Naive thymus-derived CD4-positive, alpha-beta T cell (primary cell): ENCODE measurements at regions of chr9 and their contacts with region 1.

Region 1: GRCh38 chr9:7799234-7799943 is at the start of gene DMAC1:
- DNase-seq: peak; percentile 50 to 79 (median 72)
- ATAC-seq: peak; percentile 96
- H3K4me3 ChIP-seq: peak within 1 kb of the TSS; percentile 96
- H3K4me3 Mint-ChIP-seq: peak within 1 kb of the TSS; percentile 91 to 98 (median 95)
- H3K27ac ChIP-seq: peak within 1 kb of the TSS; percentile 88
- H3K27ac Mint-ChIP-seq: peak within 1 kb of the TSS; percentile 90 to 98 (median 93)
- H3K4me1 ChIP-seq: peaks cover 0 to 8% of the 10 kb centered on the region in 2 donors
- H3K4me1 Mint-ChIP-seq: peaks cover 12 to 62% (median 40%) of the 10 kb centered on the region in 7 donors
- H3K27me3 ChIP-seq: no peaks in the 10 kb centered on the region
- H3K27me3 Mint-ChIP-seq: peaks cover 0 to under 1% (median 0%) of the 10 kb centered on the region in 5 donors
- total RNA-seq, gene DMAC1: 17.5 to 54.1 (median 44.3) TPM

Region 2: GRCh38 chr9:7613931-7614330 is 185.5 kb before region 1 on chr9:
- CTCF ChIA-PET with region 1: no interaction called
- POLR2A ChIA-PET with region 1: interaction called, 3 read pairs
- intact Hi-C with region 1: loop called in 1 of 2 experiments (anchors 1 kb)
- DNase-seq: peak in 6 of 9 donors; percentile 15 to 59 (median 46)
- ATAC-seq: peak; percentile 70
- H3K4me3 ChIP-seq: peak overlapping the region; percentile 0
- H3K4me3 Mint-ChIP-seq: peak overlapping the region; percentile 68 to 90 (median 82)
- H3K27ac ChIP-seq: peak overlapping the region; percentile 31
- H3K27ac Mint-ChIP-seq: peak overlapping the region; percentile 71 to 87 (median 85)
- H3K4me1 ChIP-seq: peaks cover 9 to 29% of the 10 kb centered on the region in 2 donors
- H3K4me1 Mint-ChIP-seq: peaks cover 18 to 50% (median 38%) of the 10 kb centered on the region in 7 donors
- H3K27me3 ChIP-seq: no peaks in the 10 kb centered on the region
- H3K27me3 Mint-ChIP-seq: peaks cover 0 to 17% (median 0%) of the 10 kb centered on the region in 5 donors

Region 3: GRCh38 chr9:7622481-7622880 is 176.9 kb before region 1 on chr9:
- CTCF ChIA-PET with region 1: no interaction called
- POLR2A ChIA-PET with region 1: no interaction called
- intact Hi-C with region 1: loop called in 1 of 2 experiments (anchors 2 kb)
- DNase-seq: no peak
- ATAC-seq: no peak
- H3K4me3 ChIP-seq: no peak overlapping the region
- H3K4me3 Mint-ChIP-seq: no peak overlapping the region
- H3K27ac ChIP-seq: no peak overlapping the region
- H3K27ac Mint-ChIP-seq: no peak overlapping the region
- H3K4me1 ChIP-seq: peaks cover 10 to 15% of the 10 kb centered on the region in 2 donors
- H3K4me1 Mint-ChIP-seq: peaks cover 12 to 29% (median 23%) of the 10 kb centered on the region in 7 donors
- H3K27me3 ChIP-seq: no peaks in the 10 kb centered on the region
- H3K27me3 Mint-ChIP-seq: no peaks in the 10 kb centered on the region

Region 4: GRCh38 chr9:7756088-7756487 is 43.3 kb before region 1 on chr9:
- CTCF ChIA-PET with region 1: no interaction called
- POLR2A ChIA-PET with region 1: interaction called, 6 read pairs
- intact Hi-C with region 1: loop called in 1 of 2 experiments (anchors 1 kb)
- DNase-seq: no peak
- ATAC-seq: peak; percentile 61
- H3K4me3 ChIP-seq: no peak overlapping the region
- H3K4me3 Mint-ChIP-seq: peak overlapping the region in 1 of 10 donors; percentile 7
- H3K27ac ChIP-seq: no peak overlapping the region
- H3K27ac Mint-ChIP-seq: peak overlapping the region in 3 of 9 donors; percentile 13 to 87 (median 16)
- H3K4me1 ChIP-seq: no peaks in the 10 kb centered on the region
- H3K4me1 Mint-ChIP-seq: peaks cover 0 to 27% (median 8%) of the 10 kb centered on the region in 7 donors
- H3K27me3 ChIP-seq: no peaks in the 10 kb centered on the region
- H3K27me3 Mint-ChIP-seq: no peaks in the 10 kb centered on the region

Region 5: DNA sequence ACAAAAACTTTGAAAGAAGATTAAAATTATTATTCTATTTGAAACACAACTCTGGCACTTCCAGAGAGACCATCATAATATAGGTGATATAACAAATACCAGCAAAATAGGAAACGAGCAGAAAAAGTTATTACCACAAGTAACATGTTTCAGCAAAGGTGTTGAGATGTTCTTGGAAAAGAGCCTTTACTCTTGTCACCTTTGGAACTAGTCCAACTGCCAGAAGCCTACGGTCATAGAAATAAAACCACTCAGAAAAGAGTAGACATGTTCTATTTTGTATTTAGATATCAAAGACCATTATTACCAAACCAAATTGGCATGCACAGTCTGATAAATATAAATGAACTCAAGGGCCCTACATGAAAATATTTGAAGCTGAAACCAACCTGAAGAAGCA is 145.2 kb after region 1 on chr9:
- CTCF ChIA-PET with region 1: no interaction called
- POLR2A ChIA-PET with region 1: no interaction called
- intact Hi-C with region 1: no loop called
- DNase-seq: no peak
- ATAC-seq: no peak
- H3K4me3 ChIP-seq: no peak overlapping the region
- H3K4me3 Mint-ChIP-seq: no peak overlapping the region
- H3K27ac ChIP-seq: no peak overlapping the region
- H3K27ac Mint-ChIP-seq: no peak overlapping the region
- H3K4me1 ChIP-seq: no peaks in the 10 kb centered on the region
- H3K4me1 Mint-ChIP-seq: peaks cover 0 to 16% (median 8%) of the 10 kb centered on the region in 7 donors
- H3K27me3 ChIP-seq: no peaks in the 10 kb centered on the region
- H3K27me3 Mint-ChIP-seq: no peaks in the 10 kb centered on the region

Region 6: DNA sequence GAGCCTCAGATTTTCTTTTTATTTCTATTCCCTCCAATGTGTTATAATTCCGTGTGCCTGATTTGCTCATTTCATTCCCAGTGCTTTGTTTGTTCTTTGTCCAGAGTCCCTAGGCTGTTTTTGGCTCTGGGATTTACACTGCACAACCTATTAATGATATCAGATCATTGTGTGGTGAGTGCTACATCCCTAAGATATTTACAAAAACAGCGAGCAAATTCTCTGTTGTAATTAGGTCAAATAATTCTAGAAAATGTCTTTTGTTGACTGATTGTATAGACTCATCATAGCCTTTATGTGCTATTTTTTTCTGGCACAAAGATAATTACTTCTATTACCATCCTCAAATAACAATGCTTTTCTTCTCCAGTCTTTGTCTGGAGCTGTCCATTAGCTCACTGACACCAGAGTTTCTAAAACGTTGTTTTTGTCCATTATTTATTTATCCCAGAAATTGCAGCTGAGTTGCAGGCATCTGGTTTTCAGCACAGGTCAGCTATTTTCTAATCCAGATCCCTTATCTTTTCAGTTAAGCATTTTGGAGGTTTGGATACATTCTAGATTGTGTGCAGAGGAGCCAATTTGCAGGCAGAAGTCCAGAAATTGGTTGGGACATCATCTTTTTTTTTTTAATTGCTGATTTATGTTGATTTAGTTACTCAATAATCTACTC is 380.1 kb after region 1 on chr9:
- CTCF ChIA-PET with region 1: no interaction called
- POLR2A ChIA-PET with region 1: no interaction called
- intact Hi-C with region 1: loop called in 1 of 2 experiments (anchors 5 kb)
- DNase-seq: no peak
- ATAC-seq: no peak
- H3K4me3 ChIP-seq: no peak overlapping the region
- H3K4me3 Mint-ChIP-seq: no peak overlapping the region
- H3K27ac ChIP-seq: no peak overlapping the region
- H3K27ac Mint-ChIP-seq: no peak overlapping the region
- H3K4me1 ChIP-seq: no peaks in the 10 kb centered on the region
- H3K4me1 Mint-ChIP-seq: peaks cover 0 to 5% (median 0%) of the 10 kb centered on the region in 7 donors
- H3K27me3 ChIP-seq: no peaks in the 10 kb centered on the region
- H3K27me3 Mint-ChIP-seq: peaks cover 0 to 4% (median 0%) of the 10 kb centered on the region in 5 donors